WTC11 (cell line): ENCODE measurements at regions of chr1 and their contacts with region 1.

Region 1: DNA sequence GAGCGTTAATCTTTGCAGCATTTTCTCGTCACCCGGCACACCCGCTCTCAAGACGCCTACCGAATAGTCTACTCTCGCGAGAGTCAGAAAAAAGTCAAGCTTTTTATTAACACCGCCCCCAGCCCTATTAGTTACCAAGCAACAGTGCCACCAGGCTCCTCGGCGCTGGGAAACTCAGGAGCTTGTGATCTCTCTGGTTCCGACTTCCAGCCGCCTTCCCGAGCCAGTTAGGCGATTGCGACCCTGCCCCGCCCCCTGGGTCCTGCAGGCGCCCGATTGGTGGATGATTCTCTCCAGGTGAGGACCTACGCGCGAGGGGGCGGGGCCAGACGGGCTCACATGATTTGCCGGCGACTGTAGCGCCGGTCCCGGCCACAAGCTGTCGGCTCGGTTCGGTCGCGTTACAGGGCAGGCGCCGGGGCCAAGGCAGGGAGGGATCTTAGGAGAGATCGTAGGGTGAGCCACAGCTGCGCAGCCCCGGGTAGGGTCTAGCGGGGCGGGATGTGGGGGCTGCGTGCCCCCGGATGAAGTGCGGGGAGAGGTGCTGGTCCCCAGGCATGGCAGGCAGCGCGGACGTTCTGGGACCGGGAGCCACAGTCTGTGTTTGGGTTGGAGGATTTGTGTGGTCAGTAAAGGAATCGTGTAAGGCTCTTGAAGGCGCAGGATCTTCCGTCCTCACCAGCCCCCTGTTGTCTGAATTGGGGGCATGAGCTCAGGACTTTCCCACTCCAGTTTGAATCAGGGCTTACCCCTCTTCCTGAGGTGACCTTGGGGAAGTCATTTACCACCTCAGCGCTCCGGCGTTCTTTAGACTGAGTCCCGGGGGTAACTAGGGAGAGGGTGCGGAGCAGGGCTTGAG is at the start of gene PFKFB2:
- DNase-seq: peak; percentile 100
- ATAC-seq: peak; percentile 93
- H3K4me3 Mint-ChIP-seq: peak within 1 kb of the TSS; percentile 95
- H3K27ac Mint-ChIP-seq: peak within 1 kb of the TSS; percentile 98
- H3K4me1 Mint-ChIP-seq: peaks cover 34% of the 10 kb centered on the region
- H3K27me3 Mint-ChIP-seq: no peaks in the 10 kb centered on the region
- CTCF ChIP-seq: no peak
- total RNA-seq, gene PFKFB2: 16.8 to 21.0 TPM (median 20.9 TPM) in 3 replicates

Region 2: GRCh38 chr1:206949208-206949607 is 103.9 kb before region 1 on chr1:
- CTCF ChIA-PET with region 1: no interaction called
- POLR2A ChIA-PET with region 1: no interaction called
- DNase-seq: no peak
- ATAC-seq: no peak
- H3K4me3 Mint-ChIP-seq: no peak overlapping the region
- H3K27ac Mint-ChIP-seq: no peak overlapping the region
- H3K4me1 Mint-ChIP-seq: no peaks in the 10 kb centered on the region
- H3K27me3 Mint-ChIP-seq: peaks cover 5% of the 10 kb centered on the region; the same call in 1 of the 2 replicates
- CTCF ChIP-seq: no peak

Region 3: DNA sequence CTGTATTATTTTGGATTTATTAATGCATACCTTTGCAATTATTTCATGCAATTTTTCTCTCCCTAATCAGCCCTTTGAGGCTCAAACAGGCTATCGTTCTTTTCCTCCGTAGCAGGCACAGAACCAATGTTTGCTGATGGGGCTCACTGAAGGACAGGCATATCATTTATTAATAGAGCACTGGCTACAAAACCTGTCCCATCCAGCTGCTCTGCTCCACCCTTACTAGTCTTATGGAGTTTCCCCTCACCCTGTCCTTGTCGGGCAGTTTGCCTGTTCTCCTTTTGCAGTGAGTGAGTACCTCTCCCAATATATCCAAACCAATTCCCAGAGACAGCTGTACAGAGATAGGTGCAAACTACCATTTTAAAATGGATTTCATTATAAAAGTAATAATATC is 66.3 kb before region 1 on chr1:
- CTCF ChIA-PET with region 1: no interaction called
- POLR2A ChIA-PET with region 1: no interaction called
- DNase-seq: no peak
- ATAC-seq: no peak
- H3K4me3 Mint-ChIP-seq: no peak overlapping the region
- H3K27ac Mint-ChIP-seq: no peak overlapping the region
- H3K4me1 Mint-ChIP-seq: peaks cover 35% of the 10 kb centered on the region
- H3K27me3 Mint-ChIP-seq: peaks cover 52% of the 10 kb centered on the region
- CTCF ChIP-seq: no peak

Region 4: DNA sequence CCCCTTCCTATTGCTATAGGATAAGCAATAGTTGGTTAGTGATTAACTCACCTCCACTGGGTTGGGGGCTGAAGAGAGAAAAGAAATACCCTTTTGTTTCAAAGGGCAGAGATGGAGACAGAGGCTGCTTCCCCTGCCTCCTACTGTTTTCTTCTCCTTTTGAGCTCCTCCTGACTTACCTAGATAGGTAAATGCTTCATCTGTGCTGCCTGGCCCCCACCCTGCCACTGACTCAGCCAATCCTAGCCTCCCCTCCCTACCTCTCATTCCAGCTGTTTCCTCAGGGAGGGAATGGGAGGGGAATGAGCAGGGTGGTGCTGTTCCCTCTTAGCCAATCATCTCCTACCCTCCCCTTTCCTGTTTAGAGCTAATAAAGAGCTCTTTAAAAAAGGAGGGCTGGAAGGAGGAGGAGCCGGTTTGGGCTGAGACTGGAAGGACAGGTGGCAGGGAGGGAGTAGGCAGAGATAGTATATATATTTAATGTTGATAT is 20.6 kb before region 1 on chr1 and contains the start of gene C1orf116:
- CTCF ChIA-PET with region 1: interaction called, 22 read pairs
- POLR2A ChIA-PET with region 1: interaction called, 22 read pairs
- DNase-seq: peak; percentile 70
- ATAC-seq: peak; percentile 100
- H3K4me3 Mint-ChIP-seq: peak within 1 kb of the TSS; percentile 48
- H3K27ac Mint-ChIP-seq: peak within 1 kb of the TSS; percentile 88
- H3K4me1 Mint-ChIP-seq: peaks cover 49% of the 10 kb centered on the region
- H3K27me3 Mint-ChIP-seq: no peaks in the 10 kb centered on the region
- CTCF ChIP-seq: no peak
- total RNA-seq, gene C1orf116: 2.3 to 2.7 TPM (median 2.4 TPM) in 3 replicates